ENCODE measurements at regions of chr1 and their contacts with region 1.

Region 1: GRCh38 chr1:241611063-241611462 is 29.1 kb downstream of the CHML start:
- DNase-seq: peak; percentile 61 to 90 (median 70)
- ATAC-seq: peak; percentile 93
- H3K4me3 ChIP-seq: no peak overlapping the region
- H3K27ac ChIP-seq: no peak overlapping the region
- H3K4me1 ChIP-seq: peaks cover 7 to 24% of the 10 kb centered on the region in 2 experiments
- H3K27me3 ChIP-seq: no peaks in the 10 kb centered on the region
- CTCF ChIP-seq: peak; percentile 56 to 83 (median 68); a peak in 5 of 6 replicates
- EP300 ChIP-seq: peak; percentile 50
- POLR2A ChIP-seq: no peak
- RAD21 ChIP-seq: peak; percentile 91 to 97

Region 2: GRCh38 chr1:241627453-241628259 is 16.6 kb after region 1 on chr1:
- CTCF ChIA-PET with region 1: interaction called, 3 read pairs
- POLR2A ChIA-PET with region 1: interaction called, 6 read pairs
- in situ Hi-C with region 1: no loop called
- intact Hi-C with region 1: loop called (anchors 1 kb)
- DNase-seq: peak; percentile 39 to 78 (median 48)
- ATAC-seq: peak; percentile 86
- H3K4me3 ChIP-seq: no peak overlapping the region
- H3K27ac ChIP-seq: no peak overlapping the region
- H3K4me1 ChIP-seq: peaks cover 0 to 4% of the 10 kb centered on the region in 2 experiments; a peak in 1 of 5 replicates
- H3K27me3 ChIP-seq: no peaks in the 10 kb centered on the region
- CTCF ChIP-seq: peak; percentile 51 to 78 (median 55); a peak in 5 of 6 replicates
- EP300 ChIP-seq: no peak
- POLR2A ChIP-seq: no peak; the same call in 1 of the 2 replicates
- RAD21 ChIP-seq: peak; percentile 80 to 81

Region 3: GRCh38 chr1:241847796-241848685 is 237.0 kb after region 1 on chr1 and contains the start of gene EXO1:
- CTCF ChIA-PET with region 1: no interaction called
- POLR2A ChIA-PET with region 1: interaction called, 5 read pairs
- in situ Hi-C with region 1: no loop called
- intact Hi-C with region 1: loop called (anchors 1 kb)
- DNase-seq: peak; percentile 91 to 99 (median 94)
- ATAC-seq: peak; percentile 94
- H3K4me3 ChIP-seq: peak within 1 kb of the TSS; percentile 66
- H3K27ac ChIP-seq: peak within 1 kb of the TSS; percentile 87
- H3K4me1 ChIP-seq: peaks cover 8 to 18% of the 10 kb centered on the region in 2 experiments; a peak in 3 of 5 replicates
- H3K27me3 ChIP-seq: no peaks in the 10 kb centered on the region
- CTCF ChIP-seq: peak; percentile 57 to 75 (median 72)
- EP300 ChIP-seq: no peak
- POLR2A ChIP-seq: peak; percentile 97
- RAD21 ChIP-seq: peak; percentile 37 to 47
- polyA plus RNA-seq, gene EXO1: 36.0 to 83.9 TPM

Region 4: GRCh38 chr1:241957695-241958494 is 346.8 kb after region 1 on chr1 and contains the start of gene BECN2:
- CTCF ChIA-PET with region 1: no interaction called
- POLR2A ChIA-PET with region 1: interaction called, 3 read pairs
- in situ Hi-C with region 1: no loop called
- intact Hi-C with region 1: loop called (anchors 1 kb)
- DNase-seq: peak in 3 of 4 experiments; percentile 16 to 58 (median 57)
- ATAC-seq: peak; percentile 96
- H3K4me3 ChIP-seq: no peak within 1 kb of the TSS
- H3K27ac ChIP-seq: no peak within 1 kb of the TSS
- H3K4me1 ChIP-seq: peaks cover 3 to 9% of the 10 kb centered on the region in 2 experiments; a peak in 2 of 5 replicates
- H3K27me3 ChIP-seq: peaks cover 29 to 48% of the 10 kb centered on the region in 2 experiments
- CTCF ChIP-seq: peak; percentile 61 to 78 (median 73)
- EP300 ChIP-seq: no peak
- POLR2A ChIP-seq: no peak
- RAD21 ChIP-seq: peak; percentile 41 to 82; a peak in 3 of 4 replicates
- polyA plus RNA-seq, gene BECN2: not detected

Region 5: GRCh38 chr1:241998412-241998921 is 387.4 kb after region 1 on chr1:
- CTCF ChIA-PET with region 1: interaction called, 3 read pairs
- POLR2A ChIA-PET with region 1: interaction called, 3 read pairs
- in situ Hi-C with region 1: loop called (anchors 25 kb)
- intact Hi-C with region 1: no loop called
- DNase-seq: peak; percentile 81 to 85 (median 83)
- ATAC-seq: peak; percentile 97
- H3K4me3 ChIP-seq: peak overlapping the region; percentile 48
- H3K27ac ChIP-seq: no peak overlapping the region; the same call in 2 of the 3 replicates
- H3K4me1 ChIP-seq: peaks cover 0 to 4% of the 10 kb centered on the region in 2 experiments; a peak in 1 of 5 replicates
- H3K27me3 ChIP-seq: peaks cover 27 to 50% of the 10 kb centered on the region in 2 experiments
- CTCF ChIP-seq: peak; percentile 83 to 100 (median 95)
- EP300 ChIP-seq: no peak
- POLR2A ChIP-seq: no peak
- RAD21 ChIP-seq: peak; percentile 60 to 66

Measured in K562 (cell line).